Left colon (tissue), 2 donors: ENCODE measurements at regions of chr3 and their contacts with region 1.

Region 1: GRCh38 chr3:141192345-141192744 is 39.3 kb upstream of the PXYLP1 start:
- DNase-seq: peak; percentile 91 to 99
- ATAC-seq: peak; percentile 100

Region 2: GRCh38 chr3:140898340-140899180 is 293.8 kb before region 1 on chr3:
- intact Hi-C with region 1: loop called in 1 of 2 experiments (anchors 5 kb)
- DNase-seq: no peak
- ATAC-seq: peak; percentile 88

Region 3: DNA sequence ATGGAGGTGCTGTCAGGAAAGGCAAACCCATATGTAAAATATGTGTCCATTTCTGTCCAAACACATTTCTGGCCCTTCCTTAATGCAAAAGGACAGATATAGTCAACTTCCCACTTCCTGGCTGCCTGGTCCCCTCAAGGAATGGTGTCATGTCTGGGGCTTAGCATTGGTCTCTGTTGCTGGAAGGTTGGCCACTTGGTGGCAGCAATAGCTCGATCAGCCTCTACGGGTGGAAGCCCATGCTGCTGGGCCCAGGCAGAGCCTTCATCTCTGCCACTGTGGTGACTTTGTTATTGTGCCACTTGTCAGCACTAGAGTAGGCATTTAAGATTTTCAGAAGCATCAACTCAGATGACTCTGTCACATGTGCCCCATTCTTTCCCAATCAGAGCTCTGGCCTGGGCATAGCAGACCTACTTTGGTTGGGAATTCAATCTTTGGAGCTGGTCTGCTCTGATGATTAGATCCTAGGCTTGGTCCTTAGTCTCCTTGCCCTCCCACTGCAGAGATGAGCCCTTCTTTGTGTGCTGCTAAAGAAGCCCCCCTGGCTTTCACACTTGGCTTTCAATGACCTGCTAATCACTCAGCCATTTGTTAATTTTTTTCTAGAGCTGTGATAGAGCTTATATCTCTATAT is 192.2 kb before region 1 on chr3:
- intact Hi-C with region 1: loop called (anchors 10 kb)
- DNase-seq: peak in 1 of 2 donors; percentile 51
- ATAC-seq: peak; percentile 76